CD4-positive, alpha-beta T cell (primary cell): ENCODE measurements at regions of chr4 and their contacts with region 1.

Region 1: DNA sequence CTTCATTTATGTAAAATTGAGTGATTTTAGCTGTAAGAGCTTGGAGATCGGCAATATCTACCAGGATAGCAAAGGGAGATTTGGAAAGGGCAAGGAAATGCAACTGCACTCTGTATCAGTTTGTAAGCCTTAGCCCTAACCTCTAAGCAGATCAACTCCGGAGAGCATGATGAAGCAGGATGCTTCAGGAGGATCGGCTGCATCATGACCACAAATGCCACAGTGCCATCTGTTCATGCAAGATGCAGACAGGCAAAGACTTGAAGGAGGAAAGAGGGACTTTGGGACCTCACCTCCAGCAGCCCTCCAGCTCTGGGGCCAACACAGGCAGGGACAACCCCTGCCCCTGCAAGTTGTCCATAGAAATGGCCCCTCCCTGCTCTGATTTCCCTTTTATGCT is 377.6 kb upstream of the GATB start:
- DNase-seq: peak in 8 of 14 experiments; percentile 14 to 62 (median 41)
- ATAC-seq: peak; percentile 91
- H3K4me3 ChIP-seq: no peak overlapping the region
- H3K4me3 Mint-ChIP-seq: no peak overlapping the region
- H3K27ac ChIP-seq: no peak overlapping the region
- H3K27ac Mint-ChIP-seq: no peak overlapping the region
- H3K4me1 ChIP-seq: peaks cover 12% of the 10 kb centered on the region
- H3K4me1 Mint-ChIP-seq: peaks cover 23% of the 10 kb centered on the region
- H3K27me3 ChIP-seq: no peaks in the 10 kb centered on the region
- H3K27me3 Mint-ChIP-seq: no peaks in the 10 kb centered on the region
- CTCF ChIP-seq: no peak

Region 2: GRCh38 chr4:152079543-152080293 is 58.7 kb before region 1 on chr4:
- CTCF ChIA-PET with region 1: no interaction called
- POLR2A ChIA-PET with region 1: no interaction called
- intact Hi-C with region 1: loop called in 1 of 2 experiments (anchors 10 kb)
- DNase-seq: peak in 10 of 14 experiments; percentile 25 to 83 (median 53)
- ATAC-seq: peak; percentile 94
- H3K4me3 ChIP-seq: no peak overlapping the region
- H3K4me3 Mint-ChIP-seq: peak overlapping the region; percentile 38
- H3K27ac ChIP-seq: peak overlapping the region; percentile 40 to 63
- H3K27ac Mint-ChIP-seq: peak overlapping the region; percentile 93
- H3K4me1 ChIP-seq: peaks cover 56% of the 10 kb centered on the region
- H3K4me1 Mint-ChIP-seq: peaks cover 97% of the 10 kb centered on the region
- H3K27me3 ChIP-seq: no peaks in the 10 kb centered on the region
- H3K27me3 Mint-ChIP-seq: no peaks in the 10 kb centered on the region
- CTCF ChIP-seq: no peak

Region 3: DNA sequence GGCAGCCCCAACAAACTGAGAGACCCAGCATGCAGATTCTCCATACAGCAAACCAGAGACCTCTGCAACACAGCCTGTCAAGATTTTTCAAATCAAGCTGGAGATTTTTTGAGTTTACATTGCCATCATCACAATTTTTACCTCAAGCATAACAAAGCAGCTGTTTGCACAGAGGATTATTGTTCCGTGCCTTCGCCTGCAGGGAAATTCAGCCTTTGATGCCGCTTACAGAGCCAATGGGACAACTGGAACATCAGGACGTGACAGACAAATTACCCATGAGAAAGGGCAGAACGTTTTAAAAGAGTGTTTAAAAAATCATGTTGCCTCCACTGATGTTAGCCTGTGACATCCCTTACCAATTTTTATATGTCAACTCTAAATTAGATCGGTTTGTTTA is 33.7 kb after region 1 on chr4:
- CTCF ChIA-PET with region 1: no interaction called
- POLR2A ChIA-PET with region 1: no interaction called
- intact Hi-C with region 1: no loop called
- DNase-seq: no peak
- ATAC-seq: no peak
- H3K4me3 ChIP-seq: no peak overlapping the region
- H3K4me3 Mint-ChIP-seq: no peak overlapping the region
- H3K27ac ChIP-seq: no peak overlapping the region
- H3K27ac Mint-ChIP-seq: no peak overlapping the region
- H3K4me1 ChIP-seq: no peaks in the 10 kb centered on the region
- H3K4me1 Mint-ChIP-seq: no peaks in the 10 kb centered on the region
- H3K27me3 ChIP-seq: no peaks in the 10 kb centered on the region
- H3K27me3 Mint-ChIP-seq: no peaks in the 10 kb centered on the region
- CTCF ChIP-seq: no peak